GM10248 (cell line): ENCODE measurements at regions of chr21 and their contacts with region 1.

Region 1: DNA sequence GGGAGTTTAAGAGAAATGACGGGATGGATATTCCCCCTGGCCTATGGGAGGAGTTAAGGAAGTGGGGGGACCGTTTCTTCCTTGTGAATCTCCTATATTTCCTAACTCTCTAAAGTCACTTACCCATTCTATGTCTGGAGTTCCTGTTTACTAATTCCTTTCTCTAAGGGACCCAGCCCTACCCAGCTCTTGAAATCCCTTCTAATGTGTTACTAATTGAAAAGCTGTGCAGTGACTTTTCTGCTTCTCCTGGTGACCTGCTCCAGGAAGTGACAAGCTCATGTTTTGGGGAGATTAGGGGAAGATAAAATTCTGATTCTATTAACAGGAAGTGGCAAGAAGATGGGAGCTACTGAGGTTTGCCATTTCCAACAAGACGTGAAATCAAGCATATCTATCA is 4.0 kb upstream of the SAMSN1 start:
- DNase-seq: no peak
- CTCF ChIP-seq: no peak

Region 2: DNA sequence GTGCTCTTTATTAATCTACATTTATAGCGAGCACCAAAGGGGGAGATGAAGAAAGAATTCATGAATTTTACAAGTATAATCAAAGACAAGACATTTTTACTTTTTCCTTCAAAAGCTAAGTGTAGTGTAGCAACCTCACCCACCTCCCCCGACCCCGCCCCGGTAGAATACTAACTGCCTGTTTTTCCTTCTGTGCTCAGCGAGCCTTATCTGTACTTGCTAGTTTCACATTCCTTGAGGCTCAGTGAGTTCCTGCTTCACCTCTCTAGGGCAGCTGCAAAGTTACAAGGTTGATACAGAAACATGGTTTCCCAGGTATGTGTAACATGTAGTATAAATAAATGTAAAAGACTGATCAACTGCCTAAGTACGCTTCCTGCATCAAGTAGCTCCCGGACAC is 425.9 kb before region 1 on chr21:
- CTCF ChIA-PET with region 1: no interaction called
- POLR2A ChIA-PET with region 1: no interaction called
- DNase-seq: no peak
- CTCF ChIP-seq: no peak

Region 3: GRCh38 chr21:14572204-14572780 is 22.2 kb after region 1 on chr21:
- CTCF ChIA-PET with region 1: interaction called, 11 read pairs
- POLR2A ChIA-PET with region 1: no interaction called
- DNase-seq: no peak
- CTCF ChIP-seq: no peak